Dendritic cell treated with granulocyte-macrophage colony-stimulating factor and Interleukin-4, amounts not matched to agents 40 ng/mL and 50 ng/mL, for 4 days (primary cell): ENCODE measurements at regions of chr1 and their contacts with region 1.

Region 1: DNA sequence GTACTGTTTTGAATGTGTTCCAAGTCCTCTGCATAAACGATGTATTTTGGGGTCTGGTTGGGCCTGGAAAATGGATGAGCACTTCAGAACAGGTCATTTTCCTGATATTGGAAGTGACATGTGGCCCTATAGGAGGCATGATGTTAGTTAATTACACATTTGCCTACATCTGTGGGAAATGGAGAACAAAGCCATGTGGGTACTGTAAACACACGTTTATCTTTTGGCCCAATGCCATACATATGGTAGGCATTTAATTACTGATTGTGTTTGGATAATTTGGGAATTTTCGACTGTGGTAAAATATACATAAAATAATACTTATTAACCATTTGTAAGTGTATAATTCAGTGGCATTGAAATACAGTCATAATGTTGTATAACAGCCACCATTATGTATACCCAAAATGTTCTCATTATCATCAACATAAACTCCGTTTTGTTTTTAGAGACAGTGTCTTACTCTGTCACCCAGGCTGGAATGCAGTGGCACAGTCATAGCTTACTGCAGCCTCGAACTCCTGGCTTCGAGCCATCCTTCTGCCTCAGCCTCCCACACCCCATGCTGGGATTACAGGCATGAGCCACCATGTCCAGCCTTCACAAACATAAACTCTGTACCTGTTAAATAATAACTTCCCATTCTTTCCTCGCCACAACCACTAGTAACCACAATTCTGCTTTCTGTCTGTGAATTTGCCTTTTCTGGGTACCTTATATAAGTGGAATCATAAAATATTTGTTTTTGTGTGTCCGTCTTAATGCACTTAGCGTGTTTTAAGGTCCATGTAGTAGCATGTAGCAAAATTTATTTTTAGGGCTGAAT is 11.9 kb upstream of the RNPEP start:
- H3K4me3 Mint-ChIP-seq: no peak overlapping the region
- H3K27ac Mint-ChIP-seq: no peak overlapping the region
- H3K4me1 Mint-ChIP-seq: no peaks in the 10 kb centered on the region
- H3K27me3 Mint-ChIP-seq: peaks cover 2% of the 10 kb centered on the region

Region 2: DNA sequence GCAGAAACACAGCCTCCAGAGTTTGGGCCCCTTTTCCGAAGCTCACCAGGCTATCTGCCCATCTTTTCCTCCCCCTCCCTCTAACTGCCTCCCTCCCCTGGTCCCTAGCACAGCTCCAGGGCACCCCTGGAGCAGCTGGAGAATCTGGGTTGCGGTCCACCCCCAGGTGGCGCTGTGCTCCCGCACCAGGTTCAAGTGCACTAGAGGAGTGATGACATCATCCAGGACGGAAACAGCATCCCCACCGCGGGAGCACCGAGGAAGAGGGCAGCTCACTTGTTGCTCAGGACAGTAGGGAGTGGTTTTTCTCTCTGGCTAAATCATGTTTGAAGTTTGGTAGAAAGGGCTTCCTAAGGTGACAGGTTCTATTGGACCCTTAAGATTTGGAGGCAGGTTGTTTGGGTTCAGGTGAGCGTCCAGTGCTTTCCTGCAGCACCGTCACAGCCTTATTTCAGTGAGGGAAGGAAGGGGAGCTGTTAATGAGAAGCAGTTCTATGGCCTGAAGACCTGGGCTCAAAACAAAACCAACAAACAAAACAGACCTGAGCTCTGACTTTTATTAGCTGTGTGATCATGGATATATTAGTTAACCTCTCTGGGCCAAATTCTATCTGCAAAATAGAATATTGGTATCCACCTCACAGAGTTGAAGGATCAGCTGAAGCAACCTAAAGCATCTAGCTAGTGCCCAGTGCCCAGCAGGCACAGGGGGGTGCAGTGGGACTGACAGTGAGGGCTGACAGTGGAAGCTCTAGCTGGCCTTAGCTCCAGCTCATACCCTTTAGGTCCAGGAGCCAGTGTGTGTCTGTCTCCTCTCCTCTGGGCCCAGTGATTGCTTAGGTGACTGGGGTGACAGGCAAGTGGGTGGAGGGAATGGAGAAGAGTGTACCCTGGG is 74.4 kb before region 1 on chr1:
- intact Hi-C with region 1: loop called (anchors 1 kb)
- H3K4me3 Mint-ChIP-seq: no peak overlapping the region
- H3K27ac Mint-ChIP-seq: no peak overlapping the region
- H3K4me1 Mint-ChIP-seq: peaks cover 5% of the 10 kb centered on the region
- H3K27me3 Mint-ChIP-seq: peaks cover 29% of the 10 kb centered on the region